Activated CD4-positive, alpha-beta T cell treated with anti-CD3 and anti-CD28 coated beads for 36 hours (primary cell): ENCODE measurements at regions of chr19 and their contacts with region 1.

Region 1: DNA sequence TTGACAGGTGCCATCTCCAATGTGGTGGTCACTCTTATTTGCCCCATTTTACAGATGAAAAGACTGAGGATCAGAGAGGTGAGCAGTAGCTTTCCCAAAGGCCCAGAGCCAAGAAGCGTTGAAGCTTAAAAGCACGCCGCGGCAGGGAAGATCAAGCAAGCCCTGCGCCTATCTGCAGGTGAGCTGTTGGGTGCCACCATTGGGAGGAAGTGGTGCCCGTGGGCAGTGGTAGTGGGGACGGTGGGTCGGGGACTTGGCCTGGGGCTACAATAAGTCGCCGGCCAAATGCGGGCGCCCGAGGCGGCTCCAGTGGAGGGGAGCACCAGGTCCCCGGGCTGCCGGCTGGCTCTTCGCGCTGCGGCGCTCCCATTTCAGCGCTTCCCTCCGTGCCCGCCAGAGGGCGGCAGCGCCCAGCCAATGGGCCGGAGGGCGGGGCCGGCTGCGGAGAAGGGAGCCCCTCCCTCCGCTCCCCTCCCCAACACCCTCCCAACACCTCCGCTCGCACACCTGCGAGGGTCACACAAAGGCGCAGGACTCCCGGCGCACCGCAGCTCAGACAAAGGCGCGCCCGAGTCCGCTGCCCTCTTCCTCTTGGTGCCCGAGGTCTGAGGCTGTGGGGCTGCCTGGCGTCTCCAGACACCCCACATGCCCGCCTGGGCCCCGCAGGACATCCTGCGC is 744 bp upstream of the POU2F2 start:
- DNase-seq: peak; percentile 90
- ATAC-seq: peak; percentile 59
- H3K4me3 Mint-ChIP-seq: peak overlapping the region; percentile 81
- H3K27ac Mint-ChIP-seq: peak overlapping the region; percentile 84
- H3K4me1 Mint-ChIP-seq: peaks cover 56% of the 10 kb centered on the region
- H3K27me3 Mint-ChIP-seq: no peaks in the 10 kb centered on the region

Region 2: DNA sequence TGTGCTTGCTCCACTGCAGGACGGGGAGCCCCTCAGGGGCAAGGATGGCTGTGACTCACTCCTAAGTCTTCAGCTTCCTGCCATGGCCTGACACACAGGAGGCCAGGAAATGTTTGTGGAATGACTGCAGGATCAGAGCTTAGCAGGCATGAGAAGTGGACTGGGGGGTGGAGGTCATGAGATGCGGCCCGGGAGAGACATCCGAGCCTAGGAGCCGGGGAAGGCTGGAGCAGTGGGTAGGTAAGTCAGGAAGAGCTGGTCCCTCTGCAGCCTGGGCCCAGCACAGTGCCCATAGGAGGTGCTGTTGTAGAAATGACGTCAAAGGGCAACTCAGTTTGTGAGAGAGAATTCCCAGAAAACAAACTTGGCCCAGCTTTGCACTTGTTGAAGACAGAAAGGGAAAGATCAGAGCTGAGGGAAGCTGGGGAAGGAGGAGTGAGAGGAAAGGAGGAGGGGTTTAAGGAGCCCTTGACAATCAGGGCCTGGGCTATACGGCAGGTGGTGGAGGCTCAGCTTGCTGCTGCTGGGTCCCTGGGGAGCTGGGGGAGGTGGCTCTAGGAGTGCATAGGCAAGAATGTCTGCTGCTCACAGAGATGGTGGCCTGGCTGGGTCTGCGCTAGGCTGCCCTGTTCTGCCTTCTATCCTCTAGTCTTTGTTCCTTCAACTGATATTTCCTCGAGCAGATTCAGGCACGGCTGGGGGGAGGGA is 19.2 kb before region 1 on chr19:
- CTCF ChIA-PET with region 1: interaction called, 20 read pairs
- POLR2A ChIA-PET with region 1: no interaction called
- intact Hi-C with region 1: loop called (anchors 1 kb)
- DNase-seq: no peak
- ATAC-seq: no peak
- H3K4me3 Mint-ChIP-seq: no peak overlapping the region
- H3K27ac Mint-ChIP-seq: peak overlapping the region; percentile 72
- H3K4me1 Mint-ChIP-seq: peaks cover 46% of the 10 kb centered on the region
- H3K27me3 Mint-ChIP-seq: no peaks in the 10 kb centered on the region

Region 3: DNA sequence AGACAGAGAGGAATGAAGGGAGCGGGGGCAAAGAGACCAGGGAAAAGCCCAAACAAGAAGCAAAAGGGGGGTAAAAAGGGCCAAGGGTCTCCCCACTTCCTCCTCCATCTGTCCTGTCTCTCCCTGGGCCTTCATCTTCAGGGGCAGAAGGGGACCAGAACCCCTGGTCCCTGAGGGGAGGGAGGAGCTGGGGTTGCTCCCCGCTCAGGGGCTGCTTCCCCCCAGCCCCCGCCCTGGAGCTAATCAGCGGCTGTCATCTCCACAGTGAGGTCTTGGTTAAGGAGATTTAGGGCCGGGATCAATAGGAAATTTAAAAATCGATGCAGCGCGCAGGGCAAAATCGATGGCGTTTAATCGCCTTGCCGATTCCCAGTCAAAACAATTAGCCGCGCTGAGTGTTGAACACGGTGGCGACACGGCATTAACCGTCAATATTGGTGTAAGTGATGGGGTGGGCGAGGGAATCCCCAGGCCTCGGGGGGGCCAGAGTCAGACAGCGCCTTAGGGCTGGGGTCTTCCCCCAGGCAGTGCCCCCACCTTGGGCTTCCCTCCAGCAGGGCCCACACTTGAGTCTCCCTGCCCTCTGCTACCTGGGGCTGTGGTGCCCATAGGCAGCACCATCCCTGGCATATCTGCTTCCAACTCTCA is 28.8 kb after region 1 on chr19:
- CTCF ChIA-PET with region 1: no interaction called
- POLR2A ChIA-PET with region 1: no interaction called
- intact Hi-C with region 1: no loop called
- DNase-seq: no peak
- ATAC-seq: no peak
- H3K4me3 Mint-ChIP-seq: no peak overlapping the region
- H3K27ac Mint-ChIP-seq: no peak overlapping the region
- H3K4me1 Mint-ChIP-seq: no peaks in the 10 kb centered on the region
- H3K27me3 Mint-ChIP-seq: no peaks in the 10 kb centered on the region

Region 4: DNA sequence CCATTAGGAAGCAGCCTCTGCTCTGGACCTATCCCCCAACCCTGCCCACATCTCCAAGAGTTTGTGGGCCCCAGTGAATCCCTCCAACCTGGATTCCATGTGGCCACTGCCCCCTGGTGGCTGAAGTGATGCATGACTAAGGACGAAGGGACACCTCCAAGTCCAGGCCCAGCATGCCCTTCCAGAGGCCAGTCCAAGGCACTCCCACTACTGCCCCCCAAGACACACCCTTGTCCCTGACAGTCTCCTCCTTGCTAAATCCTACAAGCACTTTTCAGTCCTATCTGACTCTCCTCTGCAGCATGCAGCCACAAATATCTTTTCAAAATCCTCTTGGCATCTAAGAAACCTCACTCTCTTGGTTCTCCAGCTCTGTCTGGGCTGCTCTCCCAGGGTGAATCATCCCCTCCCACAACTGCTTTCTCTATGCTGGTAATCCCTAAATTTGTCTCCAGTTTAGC is 51.4 kb after region 1 on chr19:
- CTCF ChIA-PET with region 1: interaction called, 27 read pairs
- POLR2A ChIA-PET with region 1: no interaction called
- intact Hi-C with region 1: loop called (anchors 1 kb)
- DNase-seq: peak; percentile 86
- ATAC-seq: peak; percentile 82
- H3K4me3 Mint-ChIP-seq: no peak overlapping the region
- H3K27ac Mint-ChIP-seq: peak overlapping the region; percentile 6
- H3K4me1 Mint-ChIP-seq: peaks cover 31% of the 10 kb centered on the region
- H3K27me3 Mint-ChIP-seq: peaks cover 4% of the 10 kb centered on the region

Region 5: DNA sequence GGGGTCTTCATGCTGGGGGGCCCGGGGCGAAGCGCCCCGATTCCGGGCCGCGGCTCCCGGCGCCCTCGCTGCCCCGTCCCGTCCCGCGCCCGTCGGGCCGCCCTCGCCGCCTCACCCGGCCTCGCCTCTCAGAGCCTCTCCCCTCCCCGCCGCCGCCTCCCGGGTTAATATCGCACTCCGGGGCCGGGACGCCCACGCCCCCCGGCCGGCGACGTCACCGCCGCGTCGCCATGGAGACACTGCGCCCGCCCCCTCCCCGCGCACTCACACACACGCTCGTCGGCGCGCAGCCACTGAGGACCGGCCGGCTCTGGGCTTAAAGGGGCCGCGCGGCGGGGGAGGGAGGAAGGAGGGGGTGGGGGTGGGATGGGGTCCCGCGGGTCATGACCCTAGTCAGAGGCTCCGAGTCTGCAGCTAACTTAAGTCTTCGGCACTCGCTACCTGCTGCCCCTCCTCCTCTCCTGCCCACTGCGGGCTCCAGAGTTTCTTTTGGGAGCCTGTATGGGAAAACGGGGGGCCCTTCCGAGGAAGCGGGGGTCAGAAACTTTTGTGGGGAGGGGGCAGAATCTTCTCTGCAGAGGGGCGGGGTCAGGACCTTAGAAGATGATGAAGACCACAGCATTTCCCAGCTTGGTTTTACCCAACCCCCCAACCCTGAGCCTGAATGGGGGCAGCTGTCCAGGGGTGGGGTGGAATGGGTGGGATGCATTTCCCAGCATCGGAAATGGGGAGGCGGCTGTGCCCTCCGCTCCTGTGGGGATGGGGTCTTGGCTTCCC is 122.2 kb after region 1 on chr19 and contains the start of gene ERF:
- CTCF ChIA-PET with region 1: interaction called, 3 read pairs
- POLR2A ChIA-PET with region 1: no interaction called
- intact Hi-C with region 1: loop called in 1 of 2 experiments (anchors 1 kb)
- DNase-seq: peak; percentile 97
- ATAC-seq: peak; percentile 73
- H3K4me3 Mint-ChIP-seq: peak within 1 kb of the TSS; percentile 70
- H3K27ac Mint-ChIP-seq: peak within 1 kb of the TSS; percentile 63
- H3K4me1 Mint-ChIP-seq: peaks cover 25% of the 10 kb centered on the region
- H3K27me3 Mint-ChIP-seq: peaks cover 3% of the 10 kb centered on the region
- total RNA-seq, gene ERF: 65.5 to 66.4 TPM

Region 6: DNA sequence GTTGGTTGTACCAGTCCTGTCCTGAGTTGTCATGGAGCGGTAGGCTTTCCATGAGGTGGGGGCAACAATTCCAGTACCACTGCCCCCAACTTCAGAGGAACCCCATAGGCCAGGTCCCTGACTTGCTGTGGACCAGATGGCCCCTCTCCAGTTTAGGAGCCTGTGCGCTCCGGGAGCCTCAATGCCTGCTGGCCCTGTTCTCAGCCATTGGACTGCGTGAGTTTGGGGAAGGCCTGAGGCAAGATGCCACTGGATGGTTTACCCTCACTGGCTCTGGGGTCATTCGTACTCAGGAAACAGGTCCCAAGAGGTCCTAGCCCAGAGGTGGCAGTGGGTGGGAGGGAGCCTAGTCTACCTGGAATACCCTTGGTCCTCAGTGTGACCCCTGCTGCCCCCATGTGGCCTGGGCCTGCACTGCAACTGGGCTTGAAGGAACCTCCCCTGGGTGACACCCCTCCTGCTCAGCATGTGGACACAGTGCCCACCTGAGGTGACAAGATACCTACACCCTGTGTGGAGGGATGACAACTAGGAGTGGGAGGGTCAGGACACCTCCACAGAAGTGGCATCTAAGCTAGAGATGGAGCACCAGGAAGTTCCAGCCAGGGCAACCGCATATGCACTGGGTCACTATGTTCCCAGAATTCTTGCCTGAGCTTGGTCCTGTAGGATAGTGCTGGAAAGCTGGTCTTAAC is 163.0 kb after region 1 on chr19:
- CTCF ChIA-PET with region 1: interaction called, 6 read pairs
- POLR2A ChIA-PET with region 1: no interaction called
- intact Hi-C with region 1: loop called (anchors 1 kb)
- DNase-seq: peak; percentile 92
- ATAC-seq: peak; percentile 87
- H3K4me3 Mint-ChIP-seq: no peak overlapping the region
- H3K27ac Mint-ChIP-seq: no peak overlapping the region
- H3K4me1 Mint-ChIP-seq: no peaks in the 10 kb centered on the region
- H3K27me3 Mint-ChIP-seq: no peaks in the 10 kb centered on the region

Region 7: GRCh38 chr19:42396381-42397262 is 263.6 kb after region 1 on chr19:
- CTCF ChIA-PET with region 1: interaction called, 4 read pairs
- POLR2A ChIA-PET with region 1: no interaction called
- intact Hi-C with region 1: loop called in 1 of 2 experiments (anchors 1 kb)
- DNase-seq: peak; percentile 97
- ATAC-seq: peak; percentile 99
- H3K4me3 Mint-ChIP-seq: peak overlapping the region; percentile 88
- H3K27ac Mint-ChIP-seq: peak overlapping the region; percentile 90
- H3K4me1 Mint-ChIP-seq: peaks cover 18% of the 10 kb centered on the region
- H3K27me3 Mint-ChIP-seq: peaks cover 2% of the 10 kb centered on the region

Region 8: GRCh38 chr19:42433503-42434260 is 300.7 kb after region 1 on chr19:
- CTCF ChIA-PET with region 1: interaction called, 4 read pairs
- POLR2A ChIA-PET with region 1: no interaction called
- intact Hi-C with region 1: loop called in 1 of 2 experiments (anchors 2 kb)
- DNase-seq: peak; percentile 84
- ATAC-seq: peak; percentile 79
- H3K4me3 Mint-ChIP-seq: no peak overlapping the region
- H3K27ac Mint-ChIP-seq: no peak overlapping the region
- H3K4me1 Mint-ChIP-seq: peaks cover 5% of the 10 kb centered on the region
- H3K27me3 Mint-ChIP-seq: no peaks in the 10 kb centered on the region